ENCODE measurements at regions of chr2 and their contacts with region 1.

Region 1: GRCh38 chr2:190507135-190507534 is 27.4 kb downstream of the NEMP2 start:
- DNase-seq: no peak
- ATAC-seq: no peak
- H3K4me3 ChIP-seq: no peak overlapping the region
- H3K27ac ChIP-seq: no peak overlapping the region
- H3K4me1 ChIP-seq: no peaks in the 10 kb centered on the region
- H3K27me3 ChIP-seq: no peaks in the 10 kb centered on the region
- CTCF ChIP-seq: no peak
- POLR2A ChIP-seq: no peak

Region 2: GRCh38 chr2:190382851-190383250 is 124.3 kb before region 1 on chr2:
- intact Hi-C with region 1: loop called in 1 of 2 experiments (anchors 10 kb)
- DNase-seq: no peak
- ATAC-seq: peak; percentile 81 to 90 (median 84)
- H3K4me3 ChIP-seq: no peak overlapping the region
- H3K27ac ChIP-seq: no peak overlapping the region
- H3K4me1 ChIP-seq: no peaks in the 10 kb centered on the region
- H3K27me3 ChIP-seq: no peaks in the 10 kb centered on the region
- CTCF ChIP-seq: peak; percentile 49 to 81 (median 60)
- POLR2A ChIP-seq: no peak

Region 3: GRCh38 chr2:190648289-190649034 is 141.3 kb after region 1 on chr2:
- intact Hi-C with region 1: no loop called
- DNase-seq: peak; percentile 93 to 94 (median 94)
- ATAC-seq: peak; percentile 86 to 94 (median 91)
- H3K4me3 ChIP-seq: peak overlapping the region; percentile 73 to 82 (median 75)
- H3K27ac ChIP-seq: peak overlapping the region; percentile 78 to 93 (median 88)
- H3K4me1 ChIP-seq: peaks cover 0 to 16% (median 2%) of the 10 kb centered on the region in 4 donors
- H3K27me3 ChIP-seq: no peaks in the 10 kb centered on the region
- CTCF ChIP-seq: no peak
- POLR2A ChIP-seq: peak; percentile 76

Region 4: GRCh38 chr2:190670182-190670946 is 163.2 kb after region 1 on chr2:
- intact Hi-C with region 1: no loop called
- DNase-seq: no peak
- ATAC-seq: no peak
- H3K4me3 ChIP-seq: no peak overlapping the region
- H3K27ac ChIP-seq: no peak overlapping the region
- H3K4me1 ChIP-seq: no peaks in the 10 kb centered on the region
- H3K27me3 ChIP-seq: no peaks in the 10 kb centered on the region
- CTCF ChIP-seq: no peak
- POLR2A ChIP-seq: no peak